Activated naive CD4-positive, alpha-beta T cell treated with anti-CD3 and anti-CD28 coated beads for 36 hours (primary cell): ENCODE measurements at regions of chr7 and their contacts with region 1.

Region 1: GRCh38 chr7:66493235-66494181 is 135.2 kb upstream of the KCTD7 start:
- DNase-seq: peak; percentile 96
- H3K4me3 Mint-ChIP-seq: peak overlapping the region; percentile 84
- H3K27ac Mint-ChIP-seq: peak overlapping the region; percentile 93
- H3K4me1 Mint-ChIP-seq: peaks cover 11% of the 10 kb centered on the region
- H3K27me3 Mint-ChIP-seq: no peaks in the 10 kb centered on the region

Region 2: GRCh38 chr7:65981965-65982792 is 511.3 kb before region 1 on chr7 and contains the start of gene GUSB:
- CTCF ChIA-PET with region 1: no interaction called
- intact Hi-C with region 1: loop called (anchors 2 kb)
- DNase-seq: peak; percentile 93
- H3K4me3 Mint-ChIP-seq: peak within 1 kb of the TSS; percentile 87
- H3K27ac Mint-ChIP-seq: peak within 1 kb of the TSS; percentile 78
- H3K4me1 Mint-ChIP-seq: peaks cover 8% of the 10 kb centered on the region
- H3K27me3 Mint-ChIP-seq: no peaks in the 10 kb centered on the region
- total RNA-seq, gene GUSB: 42.8 to 44.0 TPM

Region 3: DNA sequence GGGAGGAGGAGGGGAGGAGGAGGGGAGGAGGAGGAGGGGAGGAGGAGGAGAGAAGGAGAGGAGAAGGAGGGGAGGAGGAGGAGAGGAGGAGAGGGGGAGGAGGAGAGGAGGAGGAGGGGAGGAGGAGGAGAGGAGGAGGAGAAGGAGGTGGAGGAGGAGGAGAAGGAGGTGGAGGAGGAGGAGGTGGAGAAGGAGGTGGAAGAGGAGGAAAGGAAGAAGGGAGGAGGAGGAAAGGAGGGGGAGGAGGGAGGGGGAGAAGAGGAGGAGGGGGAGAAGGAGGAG is 394.2 kb before region 1 on chr7:
- CTCF ChIA-PET with region 1: no interaction called
- intact Hi-C with region 1: no loop called
- DNase-seq: no peak
- H3K4me3 Mint-ChIP-seq: peak overlapping the region; percentile 81
- H3K27ac Mint-ChIP-seq: no peak overlapping the region
- H3K4me1 Mint-ChIP-seq: peaks cover 11% of the 10 kb centered on the region
- H3K27me3 Mint-ChIP-seq: no peaks in the 10 kb centered on the region

Region 4: GRCh38 chr7:66204822-66205740 is 288.4 kb before region 1 on chr7 and contains the start of gene TPST1:
- CTCF ChIA-PET with region 1: no interaction called
- intact Hi-C with region 1: loop called (anchors 1 kb)
- DNase-seq: peak; percentile 84
- H3K4me3 Mint-ChIP-seq: peak within 1 kb of the TSS; percentile 88
- H3K27ac Mint-ChIP-seq: no peak within 1 kb of the TSS
- H3K4me1 Mint-ChIP-seq: peaks cover 29% of the 10 kb centered on the region
- H3K27me3 Mint-ChIP-seq: peaks cover 13% of the 10 kb centered on the region
- total RNA-seq, gene TPST1: 1.9 to 3.8 TPM

Region 5: GRCh38 chr7:66628361-66629140 is 135.0 kb after region 1 on chr7 and contains the start of gene KCTD7:
- CTCF ChIA-PET with region 1: interaction called, 3 read pairs
- intact Hi-C with region 1: loop called (anchors 1 kb)
- DNase-seq: peak; percentile 97
- H3K4me3 Mint-ChIP-seq: peak within 1 kb of the TSS; percentile 83
- H3K27ac Mint-ChIP-seq: peak within 1 kb of the TSS; percentile 80
- H3K4me1 Mint-ChIP-seq: peaks cover 41% of the 10 kb centered on the region
- H3K27me3 Mint-ChIP-seq: no peaks in the 10 kb centered on the region
- total RNA-seq, gene KCTD7: 6.3 to 7.5 TPM

Region 6: GRCh38 chr7:66740302-66740979 is 246.9 kb after region 1 on chr7 and contains the start of gene RABGEF1:
- CTCF ChIA-PET with region 1: no interaction called
- intact Hi-C with region 1: loop called (anchors 1 kb)
- DNase-seq: peak; percentile 97
- H3K4me3 Mint-ChIP-seq: peak within 1 kb of the TSS; percentile 92
- H3K27ac Mint-ChIP-seq: peak within 1 kb of the TSS; percentile 92
- H3K4me1 Mint-ChIP-seq: peaks cover 47% of the 10 kb centered on the region
- H3K27me3 Mint-ChIP-seq: no peaks in the 10 kb centered on the region
- total RNA-seq, gene RABGEF1: 10.7 to 10.8 TPM

Region 7: GRCh38 chr7:67453580-67454380 is 960.3 kb after region 1 on chr7:
- CTCF ChIA-PET with region 1: no interaction called
- intact Hi-C with region 1: no loop called
- DNase-seq: no peak
- H3K4me3 Mint-ChIP-seq: no peak overlapping the region
- H3K27ac Mint-ChIP-seq: no peak overlapping the region
- H3K4me1 Mint-ChIP-seq: no peaks in the 10 kb centered on the region
- H3K27me3 Mint-ChIP-seq: peaks cover 3% of the 10 kb centered on the region